ENCODE measurements at regions of chr6 and their contacts with region 1.

Region 1: GRCh38 chr6:131694831-131695426 is 6.3 kb downstream of the OR2A4 start:
- DNase-seq: peak in 1 of 2 donors; percentile 54
- ATAC-seq: peak in 7 of 8 donors; percentile 75 to 89 (median 80)
- H3K4me3 ChIP-seq: no peak overlapping the region
- H3K27ac ChIP-seq: no peak overlapping the region
- H3K4me1 ChIP-seq: no peaks in the 10 kb centered on the region
- H3K27me3 ChIP-seq: no peaks in the 10 kb centered on the region
- CTCF ChIP-seq: peak; percentile 53 to 85 (median 79)

Region 2: DNA sequence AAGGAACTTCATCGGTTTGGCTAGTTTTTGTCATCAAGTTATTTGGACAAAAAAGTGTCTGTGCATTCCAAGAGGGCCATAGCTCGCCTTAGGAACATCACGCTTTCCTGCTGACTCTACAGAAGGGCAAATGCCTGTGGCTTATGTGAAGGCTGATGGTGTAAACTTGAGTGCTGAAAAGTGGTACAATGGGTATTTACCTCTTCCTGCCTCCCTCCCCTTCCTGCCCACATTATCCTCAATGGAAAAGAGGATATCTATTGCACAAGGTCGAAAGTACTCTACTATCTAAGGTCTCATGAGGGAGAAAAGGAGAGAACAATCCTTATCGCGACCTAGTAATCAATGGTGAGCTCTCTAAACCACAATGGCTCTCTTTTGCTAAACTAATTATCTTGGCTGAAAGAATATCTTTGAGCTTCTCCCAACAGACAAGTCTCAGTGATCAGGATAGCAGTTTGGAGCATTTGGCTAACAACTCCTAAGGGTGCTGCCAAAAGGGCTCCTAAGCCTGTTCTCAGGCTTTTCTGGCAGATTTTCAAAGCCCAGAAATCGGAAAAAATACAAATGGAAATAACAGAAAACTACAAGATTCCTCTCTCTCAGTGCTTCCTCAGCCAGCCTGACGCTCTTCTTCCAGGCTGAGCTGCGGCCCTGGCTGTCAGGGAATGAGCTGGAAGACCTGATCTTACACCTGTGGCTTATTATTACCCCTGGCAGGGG is 70.3 kb after region 1 on chr6:
- intact Hi-C with region 1: loop called in 1 of 10 experiments (anchors 5 kb)
- DNase-seq: no peak
- ATAC-seq: peak in 7 of 8 donors; percentile 31 to 79 (median 69)
- H3K4me3 ChIP-seq: no peak overlapping the region
- H3K27ac ChIP-seq: peak overlapping the region in 6 of 10 donors; percentile 7 to 61 (median 40)
- H3K4me1 ChIP-seq: peaks cover 0 to 16% (median 7%) of the 10 kb centered on the region in 9 donors
- H3K27me3 ChIP-seq: no peaks in the 10 kb centered on the region
- CTCF ChIP-seq: no peak

Region 3: GRCh38 chr6:131807644-131808459 is 112.9 kb after region 1 on chr6 and contains the start of gene ENPP1:
- intact Hi-C with region 1: loop called in 1 of 10 experiments (anchors 10 kb)
- DNase-seq: peak; percentile 78 to 80
- ATAC-seq: peak; percentile 93 to 98 (median 96)
- H3K4me3 ChIP-seq: peak within 1 kb of the TSS; percentile 54 to 78 (median 68)
- H3K27ac ChIP-seq: peak within 1 kb of the TSS in 9 of 10 donors; percentile 60 to 80 (median 67)
- H3K4me1 ChIP-seq: peaks cover 0 to 19% (median 10%) of the 10 kb centered on the region in 9 donors
- H3K27me3 ChIP-seq: peaks cover 0 to 38% (median 0%) of the 10 kb centered on the region in 7 donors
- CTCF ChIP-seq: peak in 8 of 9 donors; percentile 15 to 53 (median 38)
- total RNA-seq, gene ENPP1: 1.1 to 3.2 (median 2.1) TPM

Region 4: DNA sequence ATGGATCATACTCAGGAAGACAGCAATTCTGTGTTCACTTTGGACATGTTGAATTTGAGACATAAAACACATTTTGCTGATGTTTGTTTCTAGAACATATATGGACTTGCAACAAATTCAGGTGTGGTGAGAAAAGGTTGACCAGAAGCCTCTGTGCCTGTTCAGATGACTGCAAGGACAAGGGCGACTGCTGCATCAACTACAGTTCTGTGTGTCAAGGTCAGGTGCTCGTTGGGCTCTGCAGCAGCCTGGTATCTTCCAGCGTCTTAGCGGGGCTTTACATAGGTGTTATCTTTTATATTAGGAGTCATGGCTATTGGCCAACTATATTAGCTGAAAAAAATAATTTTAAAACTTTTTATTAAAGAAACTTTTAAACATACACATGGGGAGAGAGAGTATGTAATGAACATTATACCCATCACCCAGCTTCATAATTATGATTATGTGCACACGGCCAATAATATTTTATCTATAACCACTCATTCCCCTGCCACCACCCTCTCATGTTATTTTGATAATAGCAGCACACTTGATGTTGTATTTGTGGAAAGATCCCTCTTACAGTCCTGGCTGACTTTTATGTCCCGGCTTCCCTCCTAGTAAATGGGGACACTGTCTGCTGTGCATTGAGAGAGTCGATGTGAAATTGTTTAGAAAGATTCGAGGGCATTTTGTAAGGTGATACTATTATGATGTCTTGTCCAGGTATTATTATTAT is 156.3 kb after region 1 on chr6:
- intact Hi-C with region 1: no loop called
- DNase-seq: no peak
- ATAC-seq: peak in 5 of 8 donors; percentile 22 to 54 (median 48)
- H3K4me3 ChIP-seq: no peak overlapping the region
- H3K27ac ChIP-seq: no peak overlapping the region
- H3K4me1 ChIP-seq: no peaks in the 10 kb centered on the region
- H3K27me3 ChIP-seq: no peaks in the 10 kb centered on the region
- CTCF ChIP-seq: no peak

Measured in heart right ventricle (tissue), 16 donors.